HepG2 (cell line): ENCODE measurements at regions of chr20 and their contacts with region 1.

Region 1: GRCh38 chr20:8535403-8536261 is 403.6 kb downstream of the PLCB1 start:
- DNase-seq: peak; percentile 23
- ATAC-seq: peak; percentile 87
- H3K4me3 ChIP-seq: no peak overlapping the region
- H3K27ac ChIP-seq: no peak overlapping the region
- H3K4me1 ChIP-seq: no peaks in the 10 kb centered on the region
- H3K27me3 ChIP-seq: no peaks in the 10 kb centered on the region
- CTCF ChIP-seq: peak; percentile 57
- EP300 ChIP-seq: no peak
- POLR2A ChIP-seq: no peak
- RAD21 ChIP-seq: no peak

Region 2: DNA sequence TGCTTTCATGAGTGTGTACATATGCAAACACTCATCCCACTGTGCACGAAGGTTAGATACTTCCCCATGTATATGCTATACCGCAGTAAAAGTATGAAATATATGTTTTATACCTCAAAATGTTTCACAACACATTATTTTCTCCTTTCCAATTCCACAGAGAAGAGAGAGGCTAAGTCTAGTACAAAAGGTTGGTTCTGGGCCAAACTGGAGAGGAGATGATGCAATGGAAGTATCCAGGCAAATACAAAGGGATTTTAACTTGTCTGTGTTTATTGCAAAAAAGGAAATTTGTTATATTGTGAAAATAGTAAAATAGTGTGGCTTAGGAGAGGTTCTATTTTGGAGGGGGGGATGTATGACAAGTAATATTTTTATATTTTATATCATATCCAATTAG is 291.0 kb before region 1 on chr20:
- CTCF ChIA-PET with region 1: no interaction called
- POLR2A ChIA-PET with region 1: no interaction called
- in situ Hi-C with region 1: no loop called
- intact Hi-C with region 1: loop called (anchors 10 kb)
- DNase-seq: peak; percentile 50
- ATAC-seq: peak; percentile 50; the same call in 1 of the 3 replicates
- H3K4me3 ChIP-seq: no peak overlapping the region
- H3K27ac ChIP-seq: no peak overlapping the region
- H3K4me1 ChIP-seq: peaks cover 45% of the 10 kb centered on the region
- H3K27me3 ChIP-seq: no peaks in the 10 kb centered on the region
- CTCF ChIP-seq: no peak
- EP300 ChIP-seq: no peak
- POLR2A ChIP-seq: no peak
- RAD21 ChIP-seq: no peak

Region 3: GRCh38 chr20:8473459-8473858 is 62.2 kb before region 1 on chr20:
- CTCF ChIA-PET with region 1: no interaction called
- POLR2A ChIA-PET with region 1: no interaction called
- in situ Hi-C with region 1: no loop called
- intact Hi-C with region 1: no loop called
- DNase-seq: no peak
- ATAC-seq: no peak
- H3K4me3 ChIP-seq: no peak overlapping the region
- H3K27ac ChIP-seq: no peak overlapping the region
- H3K4me1 ChIP-seq: no peaks in the 10 kb centered on the region
- H3K27me3 ChIP-seq: no peaks in the 10 kb centered on the region
- CTCF ChIP-seq: no peak
- EP300 ChIP-seq: no peak
- POLR2A ChIP-seq: no peak
- RAD21 ChIP-seq: no peak

Region 4: DNA sequence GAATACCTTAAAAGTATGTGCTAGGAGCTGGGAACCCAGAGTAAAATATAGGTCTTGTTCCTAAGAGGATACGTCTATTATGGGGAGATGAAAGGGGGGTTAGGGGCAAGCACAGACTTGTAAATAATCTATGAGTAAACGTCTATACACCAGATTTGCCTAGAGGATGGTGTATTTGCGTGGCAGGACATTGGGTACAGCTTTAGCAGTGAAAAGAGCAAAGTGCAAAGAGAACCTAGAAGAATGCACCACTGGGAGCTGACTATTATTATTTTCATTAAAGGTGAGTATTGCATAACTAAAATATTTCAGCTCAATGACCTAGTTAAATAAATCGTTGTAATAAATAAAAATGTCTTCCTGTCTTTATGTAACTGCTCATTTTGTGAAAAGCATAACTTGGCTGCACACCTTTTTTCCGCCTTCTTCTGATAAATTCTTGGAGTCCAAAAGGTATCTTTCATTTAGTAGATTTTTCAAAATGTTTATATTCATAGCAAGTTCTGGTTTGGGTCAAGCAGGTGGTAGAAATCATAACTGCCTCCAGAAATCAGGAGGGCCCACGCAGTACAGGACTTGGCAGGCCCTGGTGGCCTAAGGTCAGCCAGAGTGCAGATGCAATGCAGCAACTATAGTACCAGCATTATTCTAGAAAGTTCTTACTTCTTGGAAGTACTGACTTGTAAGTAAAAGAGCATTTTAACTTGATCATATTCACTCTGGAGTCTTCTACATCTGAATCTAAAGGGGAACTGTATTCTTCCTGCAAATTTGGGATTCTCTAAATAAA is 46.3 kb before region 1 on chr20:
- CTCF ChIA-PET with region 1: no interaction called
- POLR2A ChIA-PET with region 1: no interaction called
- in situ Hi-C with region 1: no loop called
- intact Hi-C with region 1: no loop called
- DNase-seq: peak; percentile 45
- ATAC-seq: peak; percentile 71
- H3K4me3 ChIP-seq: no peak overlapping the region
- H3K27ac ChIP-seq: no peak overlapping the region
- H3K4me1 ChIP-seq: peaks cover 17% of the 10 kb centered on the region
- H3K27me3 ChIP-seq: no peaks in the 10 kb centered on the region
- CTCF ChIP-seq: no peak
- EP300 ChIP-seq: no peak
- POLR2A ChIP-seq: no peak
- RAD21 ChIP-seq: no peak